GM12878 (cell line): ENCODE measurements at regions of chr12 and their contacts with region 1.

Region 1: DNA sequence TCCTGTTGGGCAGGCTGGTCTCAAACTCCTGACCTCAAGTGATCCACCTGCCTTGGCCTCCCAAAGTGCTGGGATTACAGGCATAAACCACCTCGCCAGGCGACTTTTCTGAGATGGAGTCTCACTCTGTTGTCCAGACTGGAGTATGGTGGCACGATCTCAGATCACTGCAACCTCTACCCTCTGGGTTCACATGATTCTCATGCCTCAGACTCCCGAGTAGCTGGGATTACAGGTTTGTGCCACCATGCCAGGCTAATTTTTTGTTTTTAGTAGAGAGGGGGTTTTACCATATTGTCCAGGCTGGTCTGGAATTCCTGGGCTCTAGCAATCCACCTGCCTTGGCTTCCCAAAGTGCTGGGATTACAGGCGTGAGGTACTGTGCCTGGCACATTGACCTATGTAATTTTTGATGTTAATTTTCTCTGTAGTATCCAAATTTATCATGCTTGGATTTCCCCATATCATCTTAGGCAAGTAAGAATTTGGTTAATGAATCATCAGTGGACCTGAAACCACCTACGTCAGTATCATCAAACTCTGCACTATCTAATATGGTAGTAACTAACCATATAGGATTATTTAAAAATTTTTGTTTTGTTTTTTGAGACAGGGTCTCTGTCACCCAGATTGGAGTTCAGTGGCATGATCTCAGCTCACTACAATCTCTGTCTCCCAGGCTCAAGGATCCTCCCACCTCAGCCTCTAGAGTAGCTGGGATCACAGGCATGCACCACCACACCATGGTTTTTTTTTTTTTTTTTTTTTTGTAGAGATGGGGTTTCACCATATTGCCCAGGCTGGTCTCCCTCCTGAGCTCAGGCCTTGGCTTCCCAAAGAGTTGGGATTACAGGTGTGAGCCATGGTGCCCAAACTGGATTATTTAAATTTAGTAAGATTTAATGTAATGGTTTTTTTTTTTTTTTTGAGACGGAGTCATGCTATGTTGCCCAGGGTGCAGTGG is 11.9 kb upstream of the ATP5F1B start:
- DNase-seq: no peak
- ATAC-seq: peak; percentile 78
- H3K4me3 ChIP-seq: no peak overlapping the region
- H3K27ac ChIP-seq: peak overlapping the region; percentile 69
- H3K4me1 ChIP-seq: peaks cover 15% of the 10 kb centered on the region
- H3K27me3 ChIP-seq: no peaks in the 10 kb centered on the region
- CTCF ChIP-seq: no peak
- EP300 ChIP-seq: no peak
- POLR2A ChIP-seq: no peak
- RAD21 ChIP-seq: no peak

Region 2: DNA sequence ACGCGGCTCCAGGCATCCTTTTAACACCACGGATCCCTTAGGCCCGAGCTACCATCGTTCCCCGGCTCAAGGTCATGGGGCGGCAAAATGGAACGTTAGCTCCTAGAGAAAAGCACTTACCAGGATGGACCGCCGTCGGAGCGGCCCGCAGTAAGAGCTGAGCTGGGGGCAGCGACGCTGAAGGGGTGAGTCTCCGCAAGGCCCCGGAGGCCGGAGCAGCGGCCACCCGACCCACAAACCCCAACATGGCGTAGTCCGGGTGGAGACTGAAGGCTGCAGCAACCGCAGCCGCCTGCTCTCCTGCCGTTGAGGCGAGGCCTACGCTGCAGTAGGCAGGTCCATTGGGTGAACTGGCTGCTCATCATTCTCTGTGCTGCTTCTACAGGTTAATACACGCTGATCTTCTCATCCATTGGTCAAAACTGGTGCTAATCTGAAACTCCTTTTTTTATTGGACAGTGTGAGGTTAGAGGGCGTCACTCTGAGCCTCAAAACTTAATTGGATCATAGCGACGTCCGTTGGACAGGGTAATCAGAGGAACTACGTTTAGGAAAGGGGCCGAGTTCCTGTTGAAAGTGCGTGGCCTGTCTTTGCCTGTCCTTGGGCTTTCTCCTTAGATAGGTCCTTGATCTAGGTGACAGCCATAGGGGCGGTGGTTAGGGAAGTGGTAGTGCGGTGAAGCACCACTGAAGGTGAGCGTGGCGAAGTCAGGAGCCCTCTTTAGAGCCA is 11.8 kb before region 1 on chr12 and contains the start of gene ATP5F1B:
- CTCF ChIA-PET with region 1: interaction called, 8 read pairs
- POLR2A ChIA-PET with region 1: interaction called, 28 read pairs
- RAD21 ChIA-PET with region 1: interaction called, 12 read pairs
- SMC1A ChIA-PET with region 1: interaction called, 15 read pairs
- in situ Hi-C with region 1: no loop called
- intact Hi-C with region 1: no loop called
- DNase-seq: peak; percentile 100
- ATAC-seq: peak; percentile 98
- H3K4me3 ChIP-seq: peak within 1 kb of the TSS; percentile 94
- H3K27ac ChIP-seq: peak within 1 kb of the TSS; percentile 89
- H3K4me1 ChIP-seq: no peaks in the 10 kb centered on the region
- H3K27me3 ChIP-seq: no peaks in the 10 kb centered on the region
- CTCF ChIP-seq: no peak
- EP300 ChIP-seq: no peak
- POLR2A ChIP-seq: peak; percentile 100
- RAD21 ChIP-seq: no peak
- polyA plus RNA-seq, gene ATP5F1B: 671 to 1,479 TPM

Region 3: GRCh38 chr12:56670836-56671235 is 13.1 kb after region 1 on chr12:
- CTCF ChIA-PET with region 1: no interaction called
- POLR2A ChIA-PET with region 1: interaction called, 14 read pairs
- RAD21 ChIA-PET with region 1: interaction called, 4 read pairs
- SMC1A ChIA-PET with region 1: interaction called, 15 read pairs
- in situ Hi-C with region 1: no loop called
- intact Hi-C with region 1: no loop called
- DNase-seq: no peak
- ATAC-seq: no peak
- H3K4me3 ChIP-seq: no peak overlapping the region
- H3K27ac ChIP-seq: no peak overlapping the region
- H3K4me1 ChIP-seq: no peaks in the 10 kb centered on the region
- H3K27me3 ChIP-seq: no peaks in the 10 kb centered on the region
- CTCF ChIP-seq: no peak
- EP300 ChIP-seq: no peak
- POLR2A ChIP-seq: no peak
- RAD21 ChIP-seq: no peak

Region 4: DNA sequence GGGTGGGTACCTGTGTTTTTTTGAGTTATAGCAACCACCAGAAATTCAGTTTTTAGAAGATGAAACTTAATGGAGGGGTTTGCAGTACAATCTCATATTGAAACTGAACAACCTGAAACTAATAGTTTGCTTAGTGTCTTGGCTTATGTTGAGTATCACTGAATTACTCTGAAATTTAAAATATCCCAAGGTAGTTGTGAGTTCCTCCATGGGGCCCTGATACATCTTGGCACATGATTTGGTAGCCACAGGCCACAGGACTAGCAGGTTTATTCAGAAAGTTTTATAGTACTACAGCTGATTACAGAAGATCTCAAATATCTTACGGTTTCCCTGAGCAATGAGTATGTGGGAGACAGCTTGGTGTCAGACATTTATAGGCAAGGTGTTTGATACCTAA is 20.0 kb after region 1 on chr12:
- CTCF ChIA-PET with region 1: interaction called, 3 read pairs
- POLR2A ChIA-PET with region 1: interaction called, 51 read pairs
- RAD21 ChIA-PET with region 1: interaction called, 3 read pairs
- SMC1A ChIA-PET with region 1: interaction called, 20 read pairs
- in situ Hi-C with region 1: no loop called
- intact Hi-C with region 1: no loop called
- DNase-seq: no peak
- ATAC-seq: peak; percentile 80
- H3K4me3 ChIP-seq: no peak overlapping the region
- H3K27ac ChIP-seq: peak overlapping the region; percentile 52; the same call in 1 of the 2 replicates
- H3K4me1 ChIP-seq: peaks cover 42% of the 10 kb centered on the region
- H3K27me3 ChIP-seq: no peaks in the 10 kb centered on the region
- CTCF ChIP-seq: no peak
- EP300 ChIP-seq: no peak
- POLR2A ChIP-seq: no peak
- RAD21 ChIP-seq: no peak

Region 5: GRCh38 chr12:56922031-56922430 is 264.3 kb after region 1 on chr12:
- CTCF ChIA-PET with region 1: no interaction called
- POLR2A ChIA-PET with region 1: no interaction called
- RAD21 ChIA-PET with region 1: no interaction called
- SMC1A ChIA-PET with region 1: no interaction called
- in situ Hi-C with region 1: no loop called
- intact Hi-C with region 1: no loop called
- DNase-seq: no peak
- ATAC-seq: no peak
- H3K4me3 ChIP-seq: no peak overlapping the region
- H3K27ac ChIP-seq: no peak overlapping the region
- H3K4me1 ChIP-seq: no peaks in the 10 kb centered on the region
- H3K27me3 ChIP-seq: no peaks in the 10 kb centered on the region; a peak in 2 of 4 replicates
- CTCF ChIP-seq: no peak
- EP300 ChIP-seq: no peak
- POLR2A ChIP-seq: no peak
- RAD21 ChIP-seq: no peak